B cell (primary cell): ENCODE measurements at regions of chr1 and their contacts with region 1.

Region 1: GRCh38 chr1:167687919-167688519 is 33.8 kb upstream of the MPZL1 start:
- DNase-seq: peak; percentile 87
- ATAC-seq: peak; percentile 76
- H3K4me3 ChIP-seq: no peak overlapping the region
- H3K4me3 Mint-ChIP-seq: no peak overlapping the region
- H3K27ac ChIP-seq: peak overlapping the region in 1 of 2 donors; percentile 58
- H3K27ac Mint-ChIP-seq: peak overlapping the region; percentile 77
- H3K4me1 ChIP-seq: peaks cover 4 to 21% of the 10 kb centered on the region in 2 donors
- H3K4me1 Mint-ChIP-seq: peaks cover 48% of the 10 kb centered on the region
- H3K27me3 ChIP-seq: no peaks in the 10 kb centered on the region
- H3K27me3 Mint-ChIP-seq: no peaks in the 10 kb centered on the region
- CTCF ChIP-seq: peak; percentile 96

Region 2: DNA sequence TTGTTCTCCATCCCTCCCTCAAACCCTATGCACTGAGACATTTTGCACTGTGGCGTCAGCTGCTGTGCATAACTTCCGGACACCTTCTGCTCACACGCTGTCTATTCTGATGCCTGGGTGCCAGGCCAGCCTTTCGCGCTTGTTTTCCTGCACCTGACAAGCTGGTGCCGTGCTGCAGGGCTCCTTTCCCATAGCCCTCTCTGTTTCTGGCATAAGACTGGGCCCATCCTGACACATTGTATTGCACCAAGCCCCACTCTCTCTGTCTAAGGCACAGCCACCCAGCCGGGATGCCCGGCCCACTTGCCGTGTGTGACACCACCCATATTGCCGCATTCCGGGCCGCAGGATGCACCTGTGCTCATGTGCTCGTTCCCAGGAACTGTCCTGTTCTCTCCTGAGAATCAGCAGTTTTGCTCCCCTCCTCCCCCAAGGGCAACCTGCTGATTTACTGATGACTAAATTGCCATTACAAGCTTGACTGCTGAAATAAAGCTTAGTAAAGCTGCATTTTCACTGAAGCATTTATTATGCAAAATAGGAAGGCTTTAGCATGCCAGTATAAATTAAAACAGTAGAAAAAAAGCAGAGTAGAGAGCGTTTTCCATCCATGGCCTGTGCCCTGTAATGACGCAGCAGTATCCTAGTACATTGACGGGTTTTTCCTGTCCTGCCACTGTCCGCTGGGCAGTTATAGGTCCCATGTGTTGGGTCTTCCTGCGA is 257.7 kb before region 1 on chr1:
- CTCF ChIA-PET with region 1: no interaction called
- POLR2A ChIA-PET with region 1: no interaction called
- intact Hi-C with region 1: no loop called
- DNase-seq: peak; percentile 57
- ATAC-seq: peak; percentile 40
- H3K4me3 ChIP-seq: peak overlapping the region in 2 of 5 experiments; percentile 16 to 25
- H3K4me3 Mint-ChIP-seq: peak overlapping the region; percentile 84
- H3K27ac ChIP-seq: peak overlapping the region; percentile 71
- H3K27ac Mint-ChIP-seq: peak overlapping the region; percentile 97
- H3K4me1 ChIP-seq: peaks cover 37 to 54% of the 10 kb centered on the region in 2 donors
- H3K4me1 Mint-ChIP-seq: peaks cover 50% of the 10 kb centered on the region
- H3K27me3 ChIP-seq: peaks cover 0 to under 1% (median under 1%) of the 10 kb centered on the region in 4 experiments
- H3K27me3 Mint-ChIP-seq: no peaks in the 10 kb centered on the region
- CTCF ChIP-seq: no peak

Region 3: GRCh38 chr1:167587872-167588271 is 100.1 kb before region 1 on chr1:
- CTCF ChIA-PET with region 1: interaction called, 18 read pairs
- POLR2A ChIA-PET with region 1: interaction called, 3 read pairs
- intact Hi-C with region 1: no loop called
- DNase-seq: no peak
- ATAC-seq: no peak
- H3K4me3 ChIP-seq: no peak overlapping the region
- H3K4me3 Mint-ChIP-seq: no peak overlapping the region
- H3K27ac ChIP-seq: no peak overlapping the region
- H3K27ac Mint-ChIP-seq: no peak overlapping the region
- H3K4me1 ChIP-seq: peaks cover 0 to 7% of the 10 kb centered on the region in 2 donors
- H3K4me1 Mint-ChIP-seq: peaks cover 9% of the 10 kb centered on the region
- H3K27me3 ChIP-seq: peaks cover 0 to 2% (median 0%) of the 10 kb centered on the region in 4 experiments
- H3K27me3 Mint-ChIP-seq: no peaks in the 10 kb centered on the region
- CTCF ChIP-seq: no peak

Region 4: GRCh38 chr1:167627865-167628641 is 60.0 kb before region 1 on chr1:
- CTCF ChIA-PET with region 1: interaction called, 42 read pairs
- POLR2A ChIA-PET with region 1: interaction called, 5 read pairs
- intact Hi-C with region 1: no loop called
- DNase-seq: peak; percentile 82
- ATAC-seq: peak; percentile 64
- H3K4me3 ChIP-seq: peak overlapping the region in 3 of 5 experiments; percentile 1 to 98 (median 16)
- H3K4me3 Mint-ChIP-seq: peak overlapping the region; percentile 92
- H3K27ac ChIP-seq: peak overlapping the region; percentile 93 to 98
- H3K27ac Mint-ChIP-seq: peak overlapping the region; percentile 93
- H3K4me1 ChIP-seq: peaks cover 71 to 72% of the 10 kb centered on the region in 2 donors
- H3K4me1 Mint-ChIP-seq: peaks cover 66% of the 10 kb centered on the region
- H3K27me3 ChIP-seq: no peaks in the 10 kb centered on the region
- H3K27me3 Mint-ChIP-seq: no peaks in the 10 kb centered on the region
- CTCF ChIP-seq: no peak

Region 5: GRCh38 chr1:167641786-167642500 is 46.1 kb before region 1 on chr1:
- CTCF ChIA-PET with region 1: interaction called, 37 read pairs
- POLR2A ChIA-PET with region 1: interaction called, 3 read pairs
- intact Hi-C with region 1: loop called (anchors 2 kb)
- DNase-seq: no peak
- ATAC-seq: no peak
- H3K4me3 ChIP-seq: no peak overlapping the region
- H3K4me3 Mint-ChIP-seq: peak overlapping the region; percentile 5
- H3K27ac ChIP-seq: peak overlapping the region in 1 of 2 donors; percentile 50
- H3K27ac Mint-ChIP-seq: peak overlapping the region; percentile 28
- H3K4me1 ChIP-seq: peaks cover 73 to 79% of the 10 kb centered on the region in 2 donors
- H3K4me1 Mint-ChIP-seq: peaks cover 91% of the 10 kb centered on the region
- H3K27me3 ChIP-seq: no peaks in the 10 kb centered on the region
- H3K27me3 Mint-ChIP-seq: no peaks in the 10 kb centered on the region
- CTCF ChIP-seq: no peak

Region 6: DNA sequence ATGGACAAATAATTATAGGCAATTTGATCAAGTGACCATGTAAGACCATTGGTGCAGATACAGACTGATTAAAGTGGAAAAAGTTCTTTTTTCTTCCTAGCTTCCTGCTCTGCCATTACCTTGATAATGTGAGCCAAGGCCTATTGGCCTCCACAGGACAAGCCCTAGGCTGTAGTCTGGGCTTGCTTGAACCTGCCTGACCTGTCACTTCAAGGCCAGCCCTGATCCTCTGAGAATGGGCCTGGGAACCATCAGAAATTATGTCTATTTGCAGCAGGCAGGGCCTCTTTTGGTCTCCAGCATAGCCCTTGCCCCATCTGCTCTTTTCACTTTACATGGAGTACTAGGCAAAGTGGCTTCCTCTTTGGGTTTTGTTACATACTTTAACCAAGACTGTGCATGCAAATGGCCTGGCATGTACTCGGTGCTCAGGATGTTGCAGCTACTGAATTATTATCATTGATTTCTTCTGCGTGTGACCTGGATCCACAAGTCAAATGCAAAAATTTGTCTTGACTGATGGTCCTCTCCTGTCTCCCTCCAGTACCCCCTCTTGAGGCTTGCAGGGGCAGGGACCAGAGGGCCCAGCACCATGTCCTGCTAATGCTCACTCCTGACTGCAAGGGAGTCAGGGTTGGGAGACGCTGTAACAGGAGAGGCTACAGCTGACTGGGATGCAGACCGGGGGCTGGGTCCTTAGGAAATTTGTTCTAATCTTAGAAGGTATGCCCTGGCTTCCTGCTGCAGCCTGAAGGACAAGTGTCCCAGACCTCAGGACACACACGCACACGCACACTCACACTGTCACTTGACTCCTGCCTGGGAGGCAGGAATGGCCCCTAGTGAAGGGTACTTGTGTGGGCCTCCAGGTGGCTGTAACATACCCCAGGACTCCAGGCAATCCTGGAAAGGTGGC is 18.6 kb before region 1 on chr1:
- CTCF ChIA-PET with region 1: interaction called, 37 read pairs
- POLR2A ChIA-PET with region 1: interaction called, 11 read pairs
- intact Hi-C with region 1: no loop called
- DNase-seq: no peak
- ATAC-seq: peak; percentile 24
- H3K4me3 ChIP-seq: no peak overlapping the region
- H3K4me3 Mint-ChIP-seq: peak overlapping the region; percentile 36
- H3K27ac ChIP-seq: peak overlapping the region; percentile 27 to 72
- H3K27ac Mint-ChIP-seq: peak overlapping the region; percentile 47
- H3K4me1 ChIP-seq: peaks cover 76 to 84% of the 10 kb centered on the region in 2 donors
- H3K4me1 Mint-ChIP-seq: peaks cover 97% of the 10 kb centered on the region
- H3K27me3 ChIP-seq: no peaks in the 10 kb centered on the region
- H3K27me3 Mint-ChIP-seq: no peaks in the 10 kb centered on the region
- CTCF ChIP-seq: no peak

Region 7: GRCh38 chr1:167708940-167709389 is 20.9 kb after region 1 on chr1:
- CTCF ChIA-PET with region 1: interaction called, 13 read pairs
- POLR2A ChIA-PET with region 1: interaction called, 9 read pairs
- intact Hi-C with region 1: loop called (anchors 2 kb)
- DNase-seq: peak; percentile 75
- ATAC-seq: peak; percentile 65
- H3K4me3 ChIP-seq: peak overlapping the region in 1 of 5 experiments; percentile 6
- H3K4me3 Mint-ChIP-seq: peak overlapping the region; percentile 75
- H3K27ac ChIP-seq: peak overlapping the region; percentile 21 to 45
- H3K27ac Mint-ChIP-seq: peak overlapping the region; percentile 83
- H3K4me1 ChIP-seq: peaks cover 58 to 59% of the 10 kb centered on the region in 2 donors
- H3K4me1 Mint-ChIP-seq: peaks cover 66% of the 10 kb centered on the region
- H3K27me3 ChIP-seq: no peaks in the 10 kb centered on the region
- H3K27me3 Mint-ChIP-seq: no peaks in the 10 kb centered on the region
- CTCF ChIP-seq: no peak